ENCODE measurements at regions of chr17 and their contacts with region 1.

Region 1: GRCh38 chr17:73719588-73720071 is 75.4 kb upstream of the SDK2 start:
- DNase-seq: no peak
- H3K4me3 ChIP-seq: no peak overlapping the region
- H3K4me3 Mint-ChIP-seq: peak overlapping the region in 1 of 8 donors; percentile 72
- H3K27ac ChIP-seq: no peak overlapping the region
- H3K27ac Mint-ChIP-seq: peak overlapping the region in 3 of 7 donors; percentile 47 to 90 (median 86)
- H3K4me1 ChIP-seq: peaks cover 40% of the 10 kb centered on the region
- H3K4me1 Mint-ChIP-seq: peaks cover 31 to 63% (median 40%) of the 10 kb centered on the region in 4 donors
- H3K27me3 ChIP-seq: no peaks in the 10 kb centered on the region
- H3K27me3 Mint-ChIP-seq: no peaks in the 10 kb centered on the region

Region 2: GRCh38 chr17:73591296-73592078 is 128.1 kb before region 1 on chr17:
- CTCF ChIA-PET with region 1: interaction called, 4 read pairs
- POLR2A ChIA-PET with region 1: interaction called, 19 read pairs
- intact Hi-C with region 1: loop called (anchors 5 kb)
- DNase-seq: peak; percentile 56 to 76 (median 71)
- H3K4me3 ChIP-seq: peak overlapping the region in 1 of 2 donors; percentile 47
- H3K4me3 Mint-ChIP-seq: peak overlapping the region; percentile 77 to 87 (median 82)
- H3K27ac ChIP-seq: peak overlapping the region; percentile 27
- H3K27ac Mint-ChIP-seq: peak overlapping the region; percentile 88 to 95 (median 92)
- H3K4me1 ChIP-seq: peaks cover 63% of the 10 kb centered on the region
- H3K4me1 Mint-ChIP-seq: peaks cover 48 to 90% (median 62%) of the 10 kb centered on the region in 4 donors
- H3K27me3 ChIP-seq: no peaks in the 10 kb centered on the region
- H3K27me3 Mint-ChIP-seq: no peaks in the 10 kb centered on the region

Region 3: GRCh38 chr17:73657473-73658116 is 62.0 kb before region 1 on chr17:
- CTCF ChIA-PET with region 1: no interaction called
- POLR2A ChIA-PET with region 1: no interaction called
- intact Hi-C with region 1: loop called (anchors 5 kb)
- DNase-seq: no peak
- H3K4me3 ChIP-seq: no peak overlapping the region
- H3K4me3 Mint-ChIP-seq: peak overlapping the region in 2 of 8 donors; percentile 1 to 46
- H3K27ac ChIP-seq: no peak overlapping the region
- H3K27ac Mint-ChIP-seq: peak overlapping the region in 1 of 7 donors; percentile 12
- H3K4me1 ChIP-seq: no peaks in the 10 kb centered on the region
- H3K4me1 Mint-ChIP-seq: peaks cover 0 to 5% (median 3%) of the 10 kb centered on the region in 4 donors
- H3K27me3 ChIP-seq: no peaks in the 10 kb centered on the region
- H3K27me3 Mint-ChIP-seq: peaks cover 4 to 5% of the 10 kb centered on the region in 2 donors

Region 4: DNA sequence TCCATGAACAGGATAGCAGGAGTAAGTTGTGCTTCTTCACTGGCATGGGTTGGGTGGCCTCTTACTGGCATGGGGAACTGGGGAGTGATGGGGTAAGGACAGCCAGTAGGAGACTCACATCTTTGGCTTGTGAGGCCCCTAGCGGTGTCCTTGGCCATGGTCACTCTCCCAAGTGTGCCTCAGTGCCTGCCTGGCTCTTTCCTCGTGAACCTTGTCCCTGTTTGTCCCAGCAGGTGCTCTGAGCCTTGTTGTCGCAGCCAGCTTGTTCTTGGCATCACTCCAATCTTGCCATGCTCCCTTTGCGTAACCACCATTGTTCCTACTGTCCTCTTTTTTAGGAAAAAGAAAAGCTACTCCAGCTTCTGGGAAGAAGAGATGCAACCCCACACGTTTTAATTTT is 21.8 kb before region 1 on chr17:
- CTCF ChIA-PET with region 1: no interaction called
- POLR2A ChIA-PET with region 1: no interaction called
- intact Hi-C with region 1: no loop called
- DNase-seq: no peak
- H3K4me3 ChIP-seq: no peak overlapping the region
- H3K4me3 Mint-ChIP-seq: no peak overlapping the region
- H3K27ac ChIP-seq: no peak overlapping the region
- H3K27ac Mint-ChIP-seq: no peak overlapping the region
- H3K4me1 ChIP-seq: no peaks in the 10 kb centered on the region
- H3K4me1 Mint-ChIP-seq: no peaks in the 10 kb centered on the region
- H3K27me3 ChIP-seq: no peaks in the 10 kb centered on the region
- H3K27me3 Mint-ChIP-seq: peaks cover 3 to 4% of the 10 kb centered on the region in 2 donors

Region 5: DNA sequence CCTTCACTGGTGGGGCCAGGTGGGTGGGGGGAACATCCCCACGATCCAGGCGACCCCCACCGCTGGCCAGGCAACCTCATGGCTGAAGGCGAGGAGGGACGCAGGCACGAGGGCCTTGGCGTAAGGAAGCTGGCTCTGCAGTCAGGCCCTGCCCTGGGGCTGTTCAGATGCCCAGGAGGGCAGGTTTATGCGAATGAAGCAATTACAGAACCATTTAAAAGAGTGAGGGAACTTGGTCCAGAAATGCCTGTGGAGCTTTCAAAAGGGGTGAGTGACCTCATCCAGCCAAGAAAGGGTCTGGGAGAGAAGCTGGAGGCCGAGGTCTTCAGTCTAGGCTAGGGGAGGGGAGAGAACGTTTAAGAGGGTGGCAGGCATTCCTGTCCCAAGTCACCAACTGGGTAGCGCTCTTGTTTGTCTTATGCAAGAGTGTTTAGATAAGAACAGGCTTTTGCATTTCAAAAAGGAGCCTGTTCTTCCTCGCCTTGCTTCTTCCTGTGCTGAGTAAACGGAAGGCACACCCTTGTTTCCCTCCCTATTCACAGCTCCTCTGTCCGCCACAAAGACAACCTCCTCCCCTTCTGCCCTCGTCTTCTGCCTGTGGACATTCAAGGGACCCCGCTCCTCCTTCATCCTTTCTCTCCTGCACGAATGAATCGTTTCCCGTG is 108.1 kb after region 1 on chr17:
- CTCF ChIA-PET with region 1: interaction called, 5 read pairs
- POLR2A ChIA-PET with region 1: interaction called, 33 read pairs
- intact Hi-C with region 1: loop called (anchors 5 kb)
- DNase-seq: peak in 4 of 5 donors; percentile 30 to 45 (median 38)
- H3K4me3 ChIP-seq: no peak overlapping the region
- H3K4me3 Mint-ChIP-seq: peak overlapping the region; percentile 34 to 81 (median 70)
- H3K27ac ChIP-seq: peak overlapping the region; percentile 40
- H3K27ac Mint-ChIP-seq: peak overlapping the region; percentile 87 to 95 (median 91)
- H3K4me1 ChIP-seq: peaks cover 76% of the 10 kb centered on the region
- H3K4me1 Mint-ChIP-seq: peaks cover 28 to 87% (median 63%) of the 10 kb centered on the region in 4 donors
- H3K27me3 ChIP-seq: no peaks in the 10 kb centered on the region
- H3K27me3 Mint-ChIP-seq: no peaks in the 10 kb centered on the region

Region 6: GRCh38 chr17:73956669-73957465 is 237.2 kb after region 1 on chr17:
- CTCF ChIA-PET with region 1: interaction called, 4 read pairs
- POLR2A ChIA-PET with region 1: no interaction called
- intact Hi-C with region 1: loop called (anchors 5 kb)
- DNase-seq: peak; percentile 38 to 57 (median 44)
- H3K4me3 ChIP-seq: no peak overlapping the region
- H3K4me3 Mint-ChIP-seq: peak overlapping the region in 1 of 8 donors; percentile 24
- H3K27ac ChIP-seq: no peak overlapping the region
- H3K27ac Mint-ChIP-seq: no peak overlapping the region
- H3K4me1 ChIP-seq: peaks cover 18% of the 10 kb centered on the region
- H3K4me1 Mint-ChIP-seq: peaks cover 0 to 8% (median 3%) of the 10 kb centered on the region in 4 donors
- H3K27me3 ChIP-seq: peaks cover 3% of the 10 kb centered on the region
- H3K27me3 Mint-ChIP-seq: peaks cover 3 to 5% of the 10 kb centered on the region in 2 donors